ENCODE measurements at regions of chr1 and their contacts with region 1.

Region 1: DNA sequence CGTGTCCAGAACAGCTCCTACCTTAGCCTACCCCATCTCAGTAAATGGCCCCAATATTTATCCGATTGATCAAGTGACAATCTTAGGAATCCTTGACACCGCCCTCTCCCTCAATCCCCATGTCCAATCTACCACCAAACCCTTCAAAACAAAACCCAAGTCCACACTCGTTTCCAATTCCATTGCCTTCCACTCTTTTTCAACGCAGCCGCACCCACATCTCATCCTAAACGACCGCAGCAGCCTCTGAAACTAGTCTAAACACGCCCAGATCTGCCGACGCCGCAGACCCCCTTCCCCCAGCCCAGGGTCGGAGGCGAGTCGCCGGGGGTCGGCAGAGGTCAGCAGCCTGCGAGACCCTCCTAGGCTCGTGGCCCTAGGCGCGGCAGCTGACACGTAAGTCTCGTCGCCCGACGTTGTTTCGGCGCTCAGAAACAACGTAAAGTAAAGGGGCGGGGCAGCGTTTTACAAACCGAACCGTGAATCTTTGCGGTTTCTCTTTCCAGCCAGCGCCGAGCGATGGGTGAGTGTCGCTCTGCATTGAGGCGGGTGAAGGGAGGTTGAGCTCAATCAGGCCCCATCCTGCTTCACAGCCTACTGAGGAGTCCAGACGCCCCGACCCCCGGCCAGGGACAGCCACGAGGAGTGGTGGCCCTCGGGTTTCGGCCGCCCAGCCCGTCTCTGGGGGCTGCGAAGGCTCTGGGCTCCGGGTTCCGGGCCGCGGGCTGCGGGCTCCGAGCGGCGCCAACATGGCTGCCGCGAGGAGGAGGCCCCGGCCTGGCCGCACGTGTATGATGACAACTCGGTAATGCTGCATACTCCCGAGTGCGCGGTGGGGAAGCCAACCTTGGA is at the start of gene RPS8:
- DNase-seq: peak; percentile 95
- ATAC-seq: peak; percentile 79
- H3K4me3 Mint-ChIP-seq: peak within 1 kb of the TSS; percentile 91
- H3K27ac Mint-ChIP-seq: peak within 1 kb of the TSS; percentile 96
- H3K4me1 Mint-ChIP-seq: peaks cover 35% of the 10 kb centered on the region
- H3K27me3 Mint-ChIP-seq: no peaks in the 10 kb centered on the region
- CTCF ChIP-seq: no peak
- total RNA-seq, gene RPS8: 3,218 to 3,314 TPM

Region 2: DNA sequence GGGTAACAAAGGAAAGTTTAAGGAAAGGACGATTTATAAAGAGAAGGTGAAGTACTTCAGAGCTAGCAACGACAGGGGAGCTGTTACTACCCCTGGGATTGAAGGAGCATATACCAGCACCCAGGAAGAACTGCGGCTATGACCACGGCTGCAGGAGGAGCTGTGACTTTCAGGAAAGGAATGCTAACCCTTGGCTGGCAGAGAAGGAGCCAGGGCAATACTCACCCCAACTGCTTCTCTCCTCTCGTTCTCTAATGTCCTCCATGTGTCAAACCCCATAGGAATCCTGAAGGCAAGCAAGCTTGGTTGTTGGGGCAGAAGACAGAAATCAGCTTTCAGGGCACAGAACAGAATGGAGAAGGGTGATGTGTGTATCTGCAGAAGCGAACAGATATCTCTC is 221.5 kb before region 1 on chr1:
- CTCF ChIA-PET with region 1: no interaction called
- POLR2A ChIA-PET with region 1: no interaction called
- intact Hi-C with region 1: no loop called
- DNase-seq: no peak
- ATAC-seq: no peak
- H3K4me3 Mint-ChIP-seq: no peak overlapping the region
- H3K27ac Mint-ChIP-seq: no peak overlapping the region
- H3K4me1 Mint-ChIP-seq: no peaks in the 10 kb centered on the region
- H3K27me3 Mint-ChIP-seq: no peaks in the 10 kb centered on the region
- CTCF ChIP-seq: no peak

Region 3: GRCh38 chr1:44645476-44646244 is 129.6 kb before region 1 on chr1:
- CTCF ChIA-PET with region 1: no interaction called
- POLR2A ChIA-PET with region 1: no interaction called
- intact Hi-C with region 1: no loop called
- DNase-seq: no peak
- ATAC-seq: no peak
- H3K4me3 Mint-ChIP-seq: no peak overlapping the region
- H3K27ac Mint-ChIP-seq: no peak overlapping the region
- H3K4me1 Mint-ChIP-seq: no peaks in the 10 kb centered on the region
- H3K27me3 Mint-ChIP-seq: no peaks in the 10 kb centered on the region
- CTCF ChIP-seq: no peak

Region 4: DNA sequence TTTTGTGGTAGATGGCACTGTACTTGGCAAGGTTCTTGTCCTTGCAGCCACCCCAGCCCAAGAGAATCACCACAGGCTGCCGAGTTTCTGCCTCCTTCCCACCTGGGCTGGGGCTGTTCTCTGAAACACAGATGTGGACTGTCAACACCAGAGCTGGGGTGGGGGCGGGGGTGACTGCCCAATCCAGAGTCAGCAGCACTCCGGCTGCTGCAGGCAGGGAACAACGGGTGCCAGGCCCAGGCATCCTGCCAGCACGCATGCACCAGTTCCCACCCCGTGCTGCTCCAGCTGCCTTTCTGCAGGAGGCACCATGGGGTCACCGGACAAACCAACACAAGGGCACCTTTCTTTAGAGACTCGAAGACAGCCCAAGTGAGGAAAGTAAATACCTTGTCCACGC is 115.1 kb before region 1 on chr1:
- CTCF ChIA-PET with region 1: no interaction called
- POLR2A ChIA-PET with region 1: no interaction called
- intact Hi-C with region 1: no loop called
- DNase-seq: no peak
- ATAC-seq: no peak
- H3K4me3 Mint-ChIP-seq: no peak overlapping the region
- H3K27ac Mint-ChIP-seq: no peak overlapping the region
- H3K4me1 Mint-ChIP-seq: peaks cover 14% of the 10 kb centered on the region
- H3K27me3 Mint-ChIP-seq: no peaks in the 10 kb centered on the region
- CTCF ChIP-seq: no peak

Region 5: DNA sequence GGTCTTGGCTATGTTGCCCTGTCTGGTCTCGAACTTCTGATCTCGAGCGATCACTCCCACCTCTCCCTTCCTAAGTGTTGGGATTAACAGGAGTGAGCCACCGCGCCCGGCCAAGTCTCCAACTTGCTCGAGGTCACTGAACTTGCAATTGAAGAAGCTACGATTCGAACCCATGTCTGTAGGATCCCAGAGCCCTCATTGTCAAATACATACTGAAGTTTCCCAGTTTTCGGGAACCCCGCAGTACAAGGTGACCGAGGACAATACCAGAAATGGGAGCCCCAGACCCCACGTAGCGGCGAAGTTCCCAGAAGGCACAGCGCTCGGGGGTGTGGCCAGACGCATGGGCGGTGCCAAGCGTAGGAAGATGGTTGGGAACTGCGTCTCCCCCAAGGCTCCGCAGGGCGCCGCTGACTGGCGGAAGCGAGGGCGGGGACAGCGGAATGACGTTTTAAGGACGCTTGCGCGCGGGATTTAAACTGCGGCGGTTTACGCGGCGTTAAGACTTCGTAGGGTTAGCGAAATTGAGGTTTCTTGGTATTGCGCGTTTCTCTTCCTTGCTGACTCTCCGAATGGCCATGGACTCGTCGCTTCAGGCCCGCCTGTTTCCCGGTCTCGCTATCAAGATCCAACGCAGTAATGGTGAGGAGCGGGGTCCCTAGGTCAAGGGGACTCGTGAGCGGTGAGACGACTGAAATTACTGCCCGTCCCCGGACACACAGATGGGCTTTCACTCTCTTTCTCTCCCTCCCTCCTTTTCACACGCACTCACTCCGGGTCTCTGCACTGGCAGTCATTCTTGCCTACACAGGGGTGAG is 35.7 kb before region 1 on chr1 and contains the start of gene KIF2C:
- CTCF ChIA-PET with region 1: no interaction called
- POLR2A ChIA-PET with region 1: interaction called, 33 read pairs
- intact Hi-C with region 1: loop called (anchors 5 kb)
- DNase-seq: peak; percentile 99
- ATAC-seq: peak; percentile 99
- H3K4me3 Mint-ChIP-seq: peak within 1 kb of the TSS; percentile 97
- H3K27ac Mint-ChIP-seq: peak within 1 kb of the TSS; percentile 90
- H3K4me1 Mint-ChIP-seq: peaks cover 15% of the 10 kb centered on the region
- H3K27me3 Mint-ChIP-seq: no peaks in the 10 kb centered on the region
- CTCF ChIP-seq: no peak
- total RNA-seq, gene KIF2C: 92.6 to 95.0 TPM

Region 6: GRCh38 chr1:44747878-44748277 is 27.4 kb before region 1 on chr1:
- CTCF ChIA-PET with region 1: no interaction called
- POLR2A ChIA-PET with region 1: interaction called, 30 read pairs
- intact Hi-C with region 1: no loop called
- DNase-seq: no peak
- ATAC-seq: no peak
- H3K4me3 Mint-ChIP-seq: no peak overlapping the region
- H3K27ac Mint-ChIP-seq: no peak overlapping the region
- H3K4me1 Mint-ChIP-seq: peaks cover 12% of the 10 kb centered on the region
- H3K27me3 Mint-ChIP-seq: no peaks in the 10 kb centered on the region
- CTCF ChIP-seq: no peak

Region 7: DNA sequence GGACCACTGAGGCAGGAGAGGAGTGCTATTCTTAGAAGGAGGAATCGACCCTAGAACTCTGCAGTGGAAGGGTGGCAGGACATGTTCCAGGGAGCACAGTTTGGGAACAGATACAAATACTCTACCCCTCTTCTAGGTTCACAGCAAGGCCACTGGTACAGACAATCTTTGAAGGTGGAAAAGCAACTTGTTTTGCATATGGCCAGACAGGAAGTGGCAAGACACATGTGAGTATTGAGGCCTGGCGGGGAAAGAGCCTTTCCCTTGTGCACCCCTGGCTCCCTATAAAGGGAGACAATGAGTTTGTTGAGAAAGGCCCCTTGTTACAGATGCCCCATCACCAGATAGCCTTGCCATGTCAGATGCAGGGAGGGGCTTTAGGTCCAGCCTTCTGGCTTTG is 17.9 kb before region 1 on chr1:
- CTCF ChIA-PET with region 1: no interaction called
- POLR2A ChIA-PET with region 1: interaction called, 36 read pairs
- intact Hi-C with region 1: no loop called
- DNase-seq: no peak
- ATAC-seq: no peak
- H3K4me3 Mint-ChIP-seq: no peak overlapping the region
- H3K27ac Mint-ChIP-seq: no peak overlapping the region
- H3K4me1 Mint-ChIP-seq: peaks cover 14% of the 10 kb centered on the region
- H3K27me3 Mint-ChIP-seq: no peaks in the 10 kb centered on the region
- CTCF ChIP-seq: no peak

Region 8: GRCh38 chr1:44786138-44786840 is 11.0 kb after region 1 on chr1:
- CTCF ChIA-PET with region 1: interaction called, 28 read pairs
- POLR2A ChIA-PET with region 1: interaction called, 181 read pairs
- intact Hi-C with region 1: no loop called
- DNase-seq: peak; percentile 78
- ATAC-seq: peak; percentile 69
- H3K4me3 Mint-ChIP-seq: peak overlapping the region; percentile 65
- H3K27ac Mint-ChIP-seq: peak overlapping the region; percentile 82
- H3K4me1 Mint-ChIP-seq: peaks cover 33% of the 10 kb centered on the region
- H3K27me3 Mint-ChIP-seq: no peaks in the 10 kb centered on the region
- CTCF ChIP-seq: peak; percentile 100

Region 9: DNA sequence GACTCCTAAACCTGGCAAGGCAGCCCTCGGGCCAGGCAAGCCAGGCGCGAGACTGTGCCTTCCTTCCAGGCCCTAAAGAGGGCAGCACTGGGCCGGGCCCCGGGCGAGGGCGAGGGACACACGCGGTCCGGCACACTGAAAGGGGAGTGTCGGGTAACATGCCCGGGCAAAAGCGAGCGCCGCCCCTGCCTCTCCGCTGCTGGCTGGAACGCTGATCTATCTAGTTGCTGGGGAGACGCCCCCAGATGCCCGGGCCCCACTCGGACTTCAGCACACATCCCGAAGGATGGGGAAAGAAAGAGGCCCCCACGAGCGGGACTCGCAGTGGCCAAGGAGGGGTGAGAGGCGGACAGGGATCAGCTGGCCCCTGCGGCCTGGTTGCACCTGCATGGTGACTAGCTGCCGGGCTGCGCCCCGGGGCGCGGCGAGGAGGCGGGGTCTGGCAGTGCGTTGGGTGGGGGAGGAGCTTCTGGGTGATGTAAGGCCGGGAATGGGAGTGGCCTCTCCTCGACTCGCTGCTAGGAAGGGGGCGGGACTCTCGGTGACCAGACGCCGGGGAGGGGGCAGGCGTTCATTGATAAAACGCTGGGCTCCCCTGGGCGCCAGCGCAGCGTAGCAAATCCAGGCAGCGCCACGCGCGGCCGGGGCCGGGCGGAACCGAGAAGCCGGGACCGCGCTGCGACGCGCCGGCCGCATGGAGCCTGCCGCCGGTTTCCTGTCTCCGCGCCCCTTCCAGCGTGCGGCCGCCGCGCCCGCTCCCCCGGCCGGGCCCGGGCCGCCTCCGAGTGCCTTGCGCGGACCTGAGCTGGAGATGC is 24.7 kb after region 1 on chr1 and contains the start of gene PLK3:
- CTCF ChIA-PET with region 1: interaction called, 4 read pairs
- POLR2A ChIA-PET with region 1: interaction called, 181 read pairs
- intact Hi-C with region 1: no loop called
- DNase-seq: peak; percentile 99
- ATAC-seq: peak; percentile 90
- H3K4me3 Mint-ChIP-seq: peak within 1 kb of the TSS; percentile 84
- H3K27ac Mint-ChIP-seq: peak within 1 kb of the TSS; percentile 100
- H3K4me1 Mint-ChIP-seq: peaks cover 35% of the 10 kb centered on the region
- H3K27me3 Mint-ChIP-seq: no peaks in the 10 kb centered on the region
- CTCF ChIP-seq: peak; percentile 76
- total RNA-seq, gene PLK3: 36.4 to 36.6 TPM

Region 10: DNA sequence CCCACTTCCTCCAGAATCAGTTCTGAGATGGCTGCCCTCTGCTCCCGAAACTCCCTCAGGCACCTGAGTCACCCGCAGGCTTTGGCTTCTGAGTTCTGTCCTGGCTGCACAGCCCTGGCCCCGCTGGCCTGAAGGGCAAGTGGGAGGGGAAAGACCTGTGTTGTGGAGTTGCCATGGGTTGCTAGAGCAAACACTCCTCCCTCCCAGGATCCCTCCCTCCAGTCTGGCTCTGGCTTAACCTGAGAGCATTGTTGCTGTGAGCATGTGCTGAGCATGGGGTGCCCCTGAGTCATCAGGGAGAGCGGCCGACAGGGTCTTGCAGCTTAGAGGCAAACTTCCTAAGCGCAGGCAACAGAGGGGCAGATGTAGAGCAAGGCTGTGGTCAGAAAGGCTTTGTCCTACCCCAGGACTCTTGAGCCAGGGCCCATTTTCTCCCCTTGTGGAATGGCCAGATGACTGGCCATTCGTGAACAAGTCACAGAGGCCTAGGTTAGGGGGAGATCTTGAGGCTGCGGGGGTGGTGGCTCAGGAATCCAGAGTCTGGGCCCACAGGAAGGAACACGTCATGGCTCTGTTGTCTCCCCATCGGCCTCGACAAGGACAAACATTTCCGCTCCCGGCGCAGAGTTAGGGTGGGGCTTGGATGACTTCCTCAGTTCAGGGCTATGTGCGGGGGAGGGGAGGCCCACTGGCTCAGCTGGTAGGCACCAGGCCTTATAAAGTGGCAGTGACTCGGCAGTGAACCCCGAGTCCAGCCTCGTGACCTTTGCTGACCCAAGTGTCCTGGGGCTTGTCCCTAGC is 32.2 kb after region 1 on chr1 and contains the start of gene DYNLT4:
- CTCF ChIA-PET with region 1: no interaction called
- POLR2A ChIA-PET with region 1: interaction called, 99 read pairs
- intact Hi-C with region 1: no loop called
- DNase-seq: peak; percentile 97
- ATAC-seq: peak; percentile 59
- H3K4me3 Mint-ChIP-seq: peak within 1 kb of the TSS; percentile 55
- H3K27ac Mint-ChIP-seq: peak within 1 kb of the TSS; percentile 99
- H3K4me1 Mint-ChIP-seq: peaks cover 89% of the 10 kb centered on the region
- H3K27me3 Mint-ChIP-seq: no peaks in the 10 kb centered on the region
- CTCF ChIP-seq: no peak
- total RNA-seq, gene DYNLT4: 0.36 to 1.1 TPM

Region 11: GRCh38 chr1:44894591-44894990 is 119.3 kb after region 1 on chr1:
- CTCF ChIA-PET with region 1: no interaction called
- POLR2A ChIA-PET with region 1: no interaction called
- intact Hi-C with region 1: no loop called
- DNase-seq: no peak
- ATAC-seq: no peak
- H3K4me3 Mint-ChIP-seq: no peak overlapping the region
- H3K27ac Mint-ChIP-seq: no peak overlapping the region
- H3K4me1 Mint-ChIP-seq: no peaks in the 10 kb centered on the region
- H3K27me3 Mint-ChIP-seq: no peaks in the 10 kb centered on the region
- CTCF ChIP-seq: no peak